H1 (cell line): ENCODE measurements at regions of chr11 and their contacts with region 1.

Region 1: GRCh38 chr11:19820100-19820499 is 107.5 kb downstream of the NAV2 start:
- DNase-seq: no peak
- H3K4me3 ChIP-seq: no peak overlapping the region
- H3K27ac ChIP-seq: 0 out of 2 replicates have a peak overlapping the region, but pooled peaks have one; percentile 16
- H3K4me1 ChIP-seq: peaks cover 24 to 42% (median 38%) of the 10 kb centered on the region in 4 experiments
- H3K27me3 ChIP-seq: no peaks in the 10 kb centered on the region
- CTCF ChIP-seq: no peak
- EP300 ChIP-seq: no peak
- POLR2A ChIP-seq: no peak
- RAD21 ChIP-seq: no peak

Region 2: GRCh38 chr11:19876750-19877149 is 56.6 kb after region 1 on chr11:
- CTCF ChIA-PET with region 1: interaction called, 12 read pairs
- POLR2A ChIA-PET with region 1: interaction called, 3 read pairs
- DNase-seq: no peak
- H3K4me3 ChIP-seq: no peak overlapping the region
- H3K27ac ChIP-seq: no peak overlapping the region
- H3K4me1 ChIP-seq: peaks cover 6 to 26% (median 15%) of the 10 kb centered on the region in 4 experiments
- H3K27me3 ChIP-seq: no peaks in the 10 kb centered on the region
- CTCF ChIP-seq: no peak
- EP300 ChIP-seq: no peak
- POLR2A ChIP-seq: no peak
- RAD21 ChIP-seq: no peak